ENCODE measurements at regions of chr20 and their contacts with region 1.

Region 1: DNA sequence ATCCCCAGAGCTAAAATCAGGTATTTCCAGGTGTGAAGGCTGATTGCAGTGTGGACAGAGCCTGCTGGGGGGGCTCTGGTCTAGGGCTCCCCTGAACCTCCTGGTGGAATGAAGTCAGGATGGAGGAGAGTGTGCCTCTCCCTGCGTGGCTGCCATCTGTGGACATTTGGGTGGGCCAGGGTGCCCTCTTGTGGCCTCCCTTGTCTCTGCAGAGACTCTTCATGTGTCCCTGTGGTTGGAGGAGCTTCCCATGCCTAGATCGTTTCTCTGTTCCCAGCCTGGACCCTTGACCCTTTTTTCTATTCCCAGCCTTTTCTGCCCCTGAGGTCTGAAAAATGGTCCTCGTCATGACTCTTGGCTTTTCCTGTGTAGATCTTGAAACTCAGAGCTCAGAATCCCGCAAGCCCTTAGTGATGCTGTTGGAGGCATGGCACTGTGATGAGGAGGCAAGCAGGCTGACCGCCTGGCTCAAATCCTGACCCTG is 9.9 kb upstream of the PSMF1 start:
- DNase-seq: peak; percentile 62
- H3K4me3 Mint-ChIP-seq: no peak overlapping the region
- H3K27ac Mint-ChIP-seq: no peak overlapping the region
- H3K4me1 Mint-ChIP-seq: peaks cover 4% of the 10 kb centered on the region
- H3K27me3 Mint-ChIP-seq: no peaks in the 10 kb centered on the region
- CTCF ChIP-seq: peak; percentile 65

Region 2: DNA sequence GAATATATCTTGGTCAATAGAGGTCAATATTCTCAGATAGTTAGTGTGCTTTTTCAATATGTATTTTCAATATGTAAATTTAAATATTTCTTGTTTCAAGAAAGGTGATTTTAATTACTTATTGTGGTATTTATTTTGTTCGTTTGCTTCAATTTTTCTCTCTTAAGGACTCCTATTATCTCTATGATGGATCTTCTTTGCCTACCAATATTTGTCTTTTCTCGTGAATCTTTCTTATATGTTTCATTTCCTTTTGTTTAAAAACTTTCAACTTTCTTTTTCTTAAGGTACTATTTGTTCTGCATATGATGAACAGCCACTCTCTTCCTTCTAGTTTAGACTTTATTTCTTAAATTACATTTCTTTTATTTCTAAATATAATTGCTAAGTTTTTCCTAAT is 36.2 kb before region 1 on chr20:
- CTCF ChIA-PET with region 1: interaction called, 10 read pairs
- POLR2A ChIA-PET with region 1: no interaction called
- intact Hi-C with region 1: no loop called
- DNase-seq: no peak
- H3K4me3 Mint-ChIP-seq: no peak overlapping the region
- H3K27ac Mint-ChIP-seq: no peak overlapping the region
- H3K4me1 Mint-ChIP-seq: no peaks in the 10 kb centered on the region
- H3K27me3 Mint-ChIP-seq: peaks cover 24% of the 10 kb centered on the region
- CTCF ChIP-seq: no peak

Region 3: DNA sequence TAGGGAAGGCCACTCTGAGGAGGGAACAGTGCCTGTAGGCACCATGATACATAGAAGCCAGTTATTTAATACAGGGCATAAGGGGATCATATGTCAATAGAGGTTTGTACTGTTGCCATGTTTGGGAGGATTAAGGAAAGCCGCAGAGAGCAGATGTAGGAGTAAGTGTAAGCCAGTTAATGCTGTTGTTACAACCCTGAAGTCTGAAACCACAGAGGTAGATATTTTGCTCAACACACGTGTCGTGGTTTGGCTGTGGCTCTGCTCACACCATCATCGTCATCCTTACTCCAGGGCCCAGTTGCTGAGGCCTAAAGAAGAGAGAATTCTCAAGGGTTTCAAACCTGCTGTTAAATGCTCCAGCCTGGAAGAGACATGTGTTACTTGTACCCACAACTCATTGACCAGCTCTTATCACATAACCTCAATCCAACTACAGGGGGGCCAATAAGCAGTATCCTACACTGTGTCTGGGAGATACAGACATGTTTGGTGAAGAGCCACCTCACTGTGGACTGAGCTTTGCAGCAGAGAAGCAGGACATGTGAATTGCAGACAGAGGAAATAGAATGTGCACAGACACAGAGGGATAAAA is 21.1 kb before region 1 on chr20:
- CTCF ChIA-PET with region 1: interaction called, 35 read pairs
- POLR2A ChIA-PET with region 1: no interaction called
- intact Hi-C with region 1: no loop called
- DNase-seq: no peak
- H3K4me3 Mint-ChIP-seq: no peak overlapping the region
- H3K27ac Mint-ChIP-seq: no peak overlapping the region
- H3K4me1 Mint-ChIP-seq: no peaks in the 10 kb centered on the region
- H3K27me3 Mint-ChIP-seq: peaks cover 12% of the 10 kb centered on the region
- CTCF ChIP-seq: no peak

Region 4: DNA sequence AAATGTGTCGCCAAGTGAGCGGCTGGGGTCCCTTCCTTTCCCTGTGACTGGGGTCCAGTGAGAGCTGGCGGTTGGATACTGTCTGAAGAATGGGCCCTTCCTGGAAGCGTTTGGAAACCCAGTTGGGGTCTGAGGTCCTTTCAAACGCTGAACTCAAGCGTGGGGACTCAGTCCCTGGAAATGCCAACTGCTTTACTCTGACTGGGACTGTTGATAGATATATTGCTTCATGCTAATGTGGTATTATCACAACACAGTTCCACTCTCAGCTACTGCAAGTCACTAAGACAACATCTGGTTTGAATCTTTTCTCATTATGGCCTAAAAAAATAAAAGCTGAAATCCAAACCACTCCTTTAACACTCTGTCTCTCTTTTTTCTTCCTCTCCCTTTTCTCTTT is 13.7 kb before region 1 on chr20:
- CTCF ChIA-PET with region 1: interaction called, 39 read pairs
- POLR2A ChIA-PET with region 1: no interaction called
- intact Hi-C with region 1: no loop called
- DNase-seq: no peak
- H3K4me3 Mint-ChIP-seq: no peak overlapping the region
- H3K27ac Mint-ChIP-seq: no peak overlapping the region
- H3K4me1 Mint-ChIP-seq: no peaks in the 10 kb centered on the region
- H3K27me3 Mint-ChIP-seq: no peaks in the 10 kb centered on the region
- CTCF ChIP-seq: no peak

Region 5: GRCh38 chr20:1118336-1119127 is 10.1 kb after region 1 on chr20 and contains the start of gene PSMF1:
- CTCF ChIA-PET with region 1: interaction called, 28 read pairs
- POLR2A ChIA-PET with region 1: interaction called, 4 read pairs
- intact Hi-C with region 1: no loop called
- DNase-seq: peak; percentile 91
- H3K4me3 Mint-ChIP-seq: peak within 1 kb of the TSS; percentile 97
- H3K27ac Mint-ChIP-seq: peak within 1 kb of the TSS; percentile 96
- H3K4me1 Mint-ChIP-seq: peaks cover 45% of the 10 kb centered on the region
- H3K27me3 Mint-ChIP-seq: no peaks in the 10 kb centered on the region
- CTCF ChIP-seq: no peak
- total RNA-seq, gene PSMF1: 207 and 212 TPM in 2 replicates

Region 6: GRCh38 chr20:1212607-1213396 is 104.3 kb after region 1 on chr20:
- CTCF ChIA-PET with region 1: interaction called, 44 read pairs
- POLR2A ChIA-PET with region 1: no interaction called
- intact Hi-C with region 1: loop called (anchors 2 kb)
- DNase-seq: peak; percentile 74
- H3K4me3 Mint-ChIP-seq: no peak overlapping the region
- H3K27ac Mint-ChIP-seq: no peak overlapping the region
- H3K4me1 Mint-ChIP-seq: peaks cover 20% of the 10 kb centered on the region
- H3K27me3 Mint-ChIP-seq: peaks cover 58% of the 10 kb centered on the region
- CTCF ChIP-seq: peak; percentile 78

Region 7: DNA sequence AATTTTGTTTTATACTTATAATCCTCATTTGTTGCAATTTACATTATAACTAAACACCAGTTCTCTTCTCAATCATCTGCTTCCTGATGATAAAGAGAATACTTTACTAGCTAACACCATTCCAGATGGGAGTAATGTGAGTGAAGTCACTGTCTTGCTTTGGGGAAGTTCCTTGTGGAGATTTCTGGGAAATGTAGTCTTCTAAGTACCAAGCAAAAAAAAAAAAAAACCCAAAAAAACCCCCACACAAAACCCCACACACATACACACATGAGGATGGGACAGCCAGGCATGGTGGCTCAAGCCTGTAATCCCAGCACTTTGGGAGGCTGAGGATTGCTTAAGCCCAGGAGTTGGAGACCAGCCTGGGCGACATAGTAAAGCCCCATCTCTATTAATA is 155.4 kb after region 1 on chr20:
- CTCF ChIA-PET with region 1: no interaction called
- POLR2A ChIA-PET with region 1: no interaction called
- intact Hi-C with region 1: no loop called
- DNase-seq: no peak
- H3K4me3 Mint-ChIP-seq: no peak overlapping the region
- H3K27ac Mint-ChIP-seq: no peak overlapping the region
- H3K4me1 Mint-ChIP-seq: peaks cover 7% of the 10 kb centered on the region
- H3K27me3 Mint-ChIP-seq: no peaks in the 10 kb centered on the region
- CTCF ChIP-seq: no peak